ENCODE measurements at regions of chr6 and their contacts with region 1.

Region 1: GRCh38 chr6:96450082-96450769 is 71.4 kb upstream of the UFL1 start:
- DNase-seq: peak in 1 of 2 experiments; percentile 30
- H3K4me3 ChIP-seq: no peak overlapping the region
- H3K4me3 Mint-ChIP-seq: peak overlapping the region; percentile 25
- H3K27ac Mint-ChIP-seq: peak overlapping the region; percentile 60
- H3K4me1 ChIP-seq: peaks cover 8% of the 10 kb centered on the region
- H3K4me1 Mint-ChIP-seq: peaks cover 13% of the 10 kb centered on the region
- H3K27me3 ChIP-seq: no peaks in the 10 kb centered on the region
- H3K27me3 Mint-ChIP-seq: no peaks in the 10 kb centered on the region
- CTCF ChIP-seq: no peak

Region 2: GRCh38 chr6:96391776-96392360 is 58.4 kb before region 1 on chr6:
- CTCF ChIA-PET with region 1: no interaction called
- POLR2A ChIA-PET with region 1: no interaction called
- intact Hi-C with region 1: no loop called
- DNase-seq: no peak
- H3K4me3 ChIP-seq: no peak overlapping the region
- H3K4me3 Mint-ChIP-seq: no peak overlapping the region
- H3K27ac Mint-ChIP-seq: no peak overlapping the region
- H3K4me1 ChIP-seq: no peaks in the 10 kb centered on the region
- H3K4me1 Mint-ChIP-seq: peaks cover 10% of the 10 kb centered on the region
- H3K27me3 ChIP-seq: no peaks in the 10 kb centered on the region
- H3K27me3 Mint-ChIP-seq: no peaks in the 10 kb centered on the region
- CTCF ChIP-seq: no peak

Region 3: DNA sequence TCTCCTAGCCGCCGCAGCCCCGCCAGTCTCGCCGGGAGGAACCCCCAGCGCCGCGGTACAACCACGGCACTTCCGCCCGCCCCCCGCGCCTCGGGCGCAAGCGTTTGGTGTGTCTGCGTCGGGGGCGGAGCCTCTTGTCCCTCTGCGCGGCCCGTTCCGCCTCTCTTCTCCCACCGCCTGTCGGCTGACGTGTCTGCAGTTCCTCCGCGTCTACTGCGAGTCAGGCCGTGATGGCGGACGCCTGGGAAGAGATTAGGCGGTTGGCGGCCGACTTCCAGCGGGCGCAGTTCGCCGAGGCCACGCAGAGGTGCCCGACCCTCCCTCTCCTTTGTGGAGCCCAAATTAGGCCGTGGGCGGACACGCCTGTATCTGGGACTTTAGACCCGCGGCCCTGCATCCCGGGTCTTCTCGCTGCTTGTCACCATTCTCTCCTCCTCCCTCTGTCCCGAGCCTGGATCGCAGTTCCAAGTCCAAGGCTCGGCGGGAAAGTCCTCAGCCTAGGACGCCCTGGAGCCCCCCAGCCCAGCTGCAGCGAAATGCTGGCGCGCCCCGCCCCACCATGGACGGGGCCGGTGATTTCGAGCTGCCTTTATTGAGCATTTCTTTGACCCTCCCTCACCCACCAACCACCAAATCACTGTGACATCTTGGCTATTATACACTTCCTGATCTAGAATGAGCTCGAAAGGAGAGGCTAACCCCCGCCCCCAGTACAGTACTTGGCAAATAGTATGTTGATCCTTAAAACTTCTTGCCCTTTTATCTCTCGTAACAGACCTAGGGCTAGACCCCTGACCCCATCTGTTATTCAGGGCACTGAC is 71.6 kb after region 1 on chr6 and contains the start of gene UFL1:
- CTCF ChIA-PET with region 1: no interaction called
- POLR2A ChIA-PET with region 1: interaction called, 3 read pairs
- intact Hi-C with region 1: loop called (anchors 5 kb)
- DNase-seq: peak; percentile 93 to 94
- H3K4me3 ChIP-seq: peak within 1 kb of the TSS; percentile 85
- H3K4me3 Mint-ChIP-seq: peak within 1 kb of the TSS; percentile 93
- H3K27ac Mint-ChIP-seq: peak within 1 kb of the TSS; percentile 99
- H3K4me1 ChIP-seq: peaks cover 18% of the 10 kb centered on the region
- H3K4me1 Mint-ChIP-seq: peaks cover 6% of the 10 kb centered on the region
- H3K27me3 ChIP-seq: no peaks in the 10 kb centered on the region
- H3K27me3 Mint-ChIP-seq: no peaks in the 10 kb centered on the region
- CTCF ChIP-seq: no peak
- total RNA-seq, gene UFL1: 19.4 and 21.9 TPM in 2 replicates